Gastrocnemius medialis (tissue), 4 donors: ENCODE measurements at regions of chr6 and their contacts with region 1.

Region 1: DNA sequence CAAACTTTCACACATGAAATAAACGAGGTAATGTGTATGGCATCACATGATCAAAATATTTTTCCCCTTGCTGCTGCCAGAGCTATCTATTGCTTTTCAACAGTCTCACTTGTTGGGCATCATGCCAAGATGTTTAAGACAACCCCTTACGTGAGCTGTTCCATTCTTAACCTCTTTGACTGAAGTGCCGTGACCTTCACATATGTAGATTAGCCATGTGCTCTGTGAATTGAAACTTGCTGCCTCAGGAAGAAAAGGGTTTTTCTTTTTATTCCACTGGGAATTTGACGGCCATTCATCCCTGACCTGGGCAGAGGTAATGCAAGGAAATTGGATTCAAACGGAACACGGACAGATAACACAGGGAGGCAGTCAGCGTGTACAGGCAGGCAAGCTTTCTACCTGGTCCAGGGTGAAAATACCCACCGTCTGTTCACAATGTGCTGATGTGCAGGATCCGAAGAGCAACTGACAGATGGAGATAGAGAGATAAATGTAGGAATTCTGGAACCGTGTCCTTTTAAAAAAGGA is 14.2 kb downstream of the ARID1B start:
- DNase-seq: no peak
- ATAC-seq: peak in 1 of 2 donors; percentile 42
- H3K4me3 ChIP-seq: peak overlapping the region in 3 of 4 donors; percentile 11 to 31 (median 20)
- H3K27ac ChIP-seq: peak overlapping the region; percentile 6 to 37 (median 22)
- H3K4me1 ChIP-seq: peaks cover 85 to 94% of the 10 kb centered on the region in 2 donors
- H3K27me3 ChIP-seq: no peaks in the 10 kb centered on the region
- CTCF ChIP-seq: no peak
- POLR2A ChIP-seq: no peak

Region 2: GRCh38 chr6:156807028-156807427 is 15.6 kb after region 1 on chr6:
- in situ Hi-C with region 1: no loop called
- intact Hi-C with region 1: loop called (anchors 2 kb)
- DNase-seq: no peak
- ATAC-seq: no peak
- H3K4me3 ChIP-seq: no peak overlapping the region
- H3K27ac ChIP-seq: peak overlapping the region; percentile 55 to 84 (median 70)
- H3K4me1 ChIP-seq: peaks cover 52 to 53% of the 10 kb centered on the region in 2 donors
- H3K27me3 ChIP-seq: no peaks in the 10 kb centered on the region
- CTCF ChIP-seq: no peak
- POLR2A ChIP-seq: no peak

Region 3: DNA sequence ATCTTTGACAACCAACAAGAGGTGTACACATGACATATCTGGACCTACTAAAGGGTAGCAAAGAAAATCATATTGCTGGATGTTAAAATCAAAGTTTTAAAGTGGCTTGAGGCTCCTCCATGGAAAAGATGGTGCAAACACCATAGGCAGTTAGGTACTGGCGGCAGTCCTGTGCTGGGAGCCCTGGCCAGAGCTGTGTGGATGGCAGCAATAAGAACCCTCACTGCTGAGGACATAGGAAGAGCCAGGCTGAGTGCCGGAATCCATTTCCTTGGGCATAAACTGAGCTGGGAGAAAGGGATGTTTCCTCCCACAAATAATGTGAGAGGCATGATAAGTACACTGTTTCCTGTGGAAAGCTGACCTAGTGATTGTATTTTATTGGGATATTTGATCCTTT is 75.7 kb after region 1 on chr6:
- in situ Hi-C with region 1: no loop called
- intact Hi-C with region 1: no loop called
- DNase-seq: no peak
- ATAC-seq: peak in 1 of 2 donors; percentile 40
- H3K4me3 ChIP-seq: no peak overlapping the region
- H3K27ac ChIP-seq: peak overlapping the region in 2 of 4 donors; percentile 46 to 51
- H3K4me1 ChIP-seq: peaks cover 71 to 77% of the 10 kb centered on the region in 2 donors
- H3K27me3 ChIP-seq: no peaks in the 10 kb centered on the region
- CTCF ChIP-seq: no peak
- POLR2A ChIP-seq: no peak

Region 4: DNA sequence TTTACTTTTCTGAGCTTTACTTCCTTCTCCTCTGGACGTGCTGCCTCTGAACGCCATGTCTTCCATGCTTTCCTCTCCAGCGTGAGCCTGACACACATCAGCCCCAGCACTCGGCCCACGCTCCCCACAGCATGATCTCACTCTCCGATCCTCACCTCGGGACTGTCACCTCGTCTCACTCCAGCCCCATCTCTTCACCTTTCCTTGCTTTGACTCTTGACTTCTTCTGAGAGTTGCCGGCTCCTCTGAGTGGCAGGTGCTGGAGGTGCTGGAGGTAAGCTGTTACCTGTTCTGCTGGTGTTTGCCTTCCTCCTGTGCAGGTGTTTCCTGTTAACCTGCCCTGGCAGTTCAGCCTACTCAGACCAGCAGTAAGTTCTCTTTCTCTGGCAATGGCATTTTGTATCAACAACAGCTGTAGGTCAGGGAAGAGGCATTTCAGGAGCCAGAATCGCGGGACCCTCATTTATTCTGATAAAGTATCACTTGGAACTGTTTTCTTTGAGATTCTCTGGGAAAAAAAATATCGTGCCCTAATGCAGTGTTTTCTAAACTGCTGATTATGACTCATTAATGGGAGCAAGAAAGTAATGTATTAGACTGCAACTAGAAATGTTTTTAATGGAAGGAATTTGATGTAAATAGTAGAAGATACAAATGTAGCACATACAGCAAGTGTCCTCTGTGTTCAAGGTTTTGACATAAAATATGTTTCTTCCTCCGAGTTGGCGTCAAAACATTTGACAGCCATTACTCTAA is 92.3 kb after region 1 on chr6:
- in situ Hi-C with region 1: no loop called
- intact Hi-C with region 1: loop called (anchors 5 kb)
- DNase-seq: no peak
- ATAC-seq: no peak
- H3K4me3 ChIP-seq: no peak overlapping the region
- H3K27ac ChIP-seq: peak overlapping the region in 3 of 4 donors; percentile 4 to 40 (median 5)
- H3K4me1 ChIP-seq: peaks cover 67 to 82% of the 10 kb centered on the region in 2 donors
- H3K27me3 ChIP-seq: no peaks in the 10 kb centered on the region
- CTCF ChIP-seq: no peak
- POLR2A ChIP-seq: no peak

Region 5: DNA sequence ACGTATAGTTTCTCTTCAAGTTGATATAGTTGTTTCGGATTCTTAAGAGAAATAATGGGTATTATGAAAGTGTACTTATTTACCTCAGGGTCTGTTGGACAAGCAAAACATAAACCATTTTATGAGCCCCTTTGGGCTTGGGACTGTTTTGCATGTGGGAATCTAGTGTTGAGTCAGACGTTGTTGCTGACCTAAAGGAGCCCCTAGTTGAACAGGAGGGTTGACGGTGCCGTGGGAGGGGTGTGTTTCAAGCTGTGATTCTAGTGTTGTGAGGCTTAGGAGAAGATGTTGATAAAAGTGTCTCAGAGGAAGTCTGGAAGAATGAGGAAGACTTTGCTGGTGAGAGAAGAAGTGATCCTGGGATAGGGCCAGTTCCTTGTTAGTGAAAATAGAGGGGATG is 125.8 kb after region 1 on chr6:
- in situ Hi-C with region 1: no loop called
- intact Hi-C with region 1: no loop called
- DNase-seq: no peak
- ATAC-seq: no peak
- H3K4me3 ChIP-seq: no peak overlapping the region
- H3K27ac ChIP-seq: peak overlapping the region in 3 of 4 donors; percentile 4 to 22 (median 5)
- H3K4me1 ChIP-seq: peaks cover 29 to 37% of the 10 kb centered on the region in 2 donors
- H3K27me3 ChIP-seq: no peaks in the 10 kb centered on the region
- CTCF ChIP-seq: no peak
- POLR2A ChIP-seq: no peak